ENCODE measurements at regions of chr2 and their contacts with region 1.

Region 1: DNA sequence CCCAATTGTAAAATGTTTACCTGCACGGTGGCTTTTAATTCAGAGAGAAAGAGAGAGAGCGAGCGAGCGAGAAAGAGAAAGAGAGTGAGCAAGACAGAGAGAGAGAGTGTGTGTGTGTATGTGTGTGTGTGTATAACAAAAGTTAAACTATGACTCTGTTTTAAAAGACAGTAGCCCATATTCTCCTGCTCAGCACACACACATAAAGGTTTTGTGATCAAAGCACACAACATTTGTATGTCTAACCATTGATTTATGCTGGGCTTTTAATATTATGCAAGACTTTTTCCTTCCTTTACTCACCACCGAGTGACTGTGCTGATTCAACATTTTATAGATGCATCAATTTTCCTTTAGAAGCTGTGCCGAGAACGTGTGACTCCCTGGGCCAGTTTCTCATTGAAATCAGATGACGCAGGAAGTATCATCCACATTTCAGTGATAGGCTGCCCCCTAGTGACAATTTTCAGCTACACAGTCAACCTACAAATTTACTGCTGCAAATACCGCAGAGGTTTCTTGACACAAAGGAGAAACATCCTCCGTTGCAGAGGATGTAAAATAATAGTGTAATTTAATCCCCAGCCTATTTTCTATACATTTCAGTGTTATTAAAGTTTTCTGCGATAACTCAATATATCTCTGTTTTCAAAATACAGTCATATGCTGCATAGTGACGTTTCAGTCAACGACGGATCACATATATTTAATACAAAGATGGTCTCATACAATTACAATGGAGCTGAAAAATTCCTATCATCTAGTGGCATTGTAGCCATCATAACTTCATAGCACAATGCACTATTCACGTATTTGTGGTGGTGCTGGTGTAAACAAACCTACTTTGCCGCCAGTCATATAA is 165.9 kb upstream of the TANK start:
- DNase-seq: peak; percentile 76
- H3K4me3 ChIP-seq: no peak overlapping the region
- H3K27ac ChIP-seq: no peak overlapping the region
- H3K27me3 ChIP-seq: no peaks in the 10 kb centered on the region
- CTCF ChIP-seq: peak; percentile 78

Region 2: DNA sequence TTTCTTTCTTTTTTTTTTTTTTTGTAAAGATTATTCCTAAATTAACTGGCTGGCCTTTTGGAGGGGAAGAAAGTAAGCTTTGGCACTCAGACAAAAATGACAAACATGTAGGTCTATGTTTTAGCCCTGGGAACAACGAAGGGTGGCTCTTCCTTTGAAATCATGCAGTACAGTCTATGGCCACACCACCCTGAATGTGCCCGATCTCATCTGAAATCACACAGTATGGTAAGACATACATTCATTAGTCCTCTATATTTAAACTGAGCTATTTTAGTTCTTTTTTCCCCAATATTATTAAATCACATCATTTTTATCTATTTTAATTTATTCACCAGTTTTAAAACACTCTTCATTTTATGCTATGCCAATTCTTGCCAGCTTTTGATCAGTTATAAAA is 980.1 kb before region 1 on chr2:
- CTCF ChIA-PET with region 1: interaction called, 12 read pairs
- POLR2A ChIA-PET with region 1: no interaction called
- DNase-seq: no peak
- H3K4me3 ChIP-seq: no peak overlapping the region
- H3K27ac ChIP-seq: no peak overlapping the region
- H3K27me3 ChIP-seq: peaks cover under 1% of the 10 kb centered on the region
- CTCF ChIP-seq: no peak

Region 3: GRCh38 chr2:160306985-160307384 is 687.4 kb before region 1 on chr2:
- CTCF ChIA-PET with region 1: no interaction called
- POLR2A ChIA-PET with region 1: no interaction called
- DNase-seq: peak; percentile 87
- H3K4me3 ChIP-seq: no peak overlapping the region
- H3K27ac ChIP-seq: peak overlapping the region; percentile 65
- H3K27me3 ChIP-seq: no peaks in the 10 kb centered on the region
- CTCF ChIP-seq: 0 out of 2 replicates have a peak, but pooled peaks have one; percentile 10

Region 4: GRCh38 chr2:160324161-160324800 is 670.1 kb before region 1 on chr2:
- CTCF ChIA-PET with region 1: interaction called, 30 read pairs
- POLR2A ChIA-PET with region 1: no interaction called
- DNase-seq: no peak
- H3K4me3 ChIP-seq: no peak overlapping the region
- H3K27ac ChIP-seq: no peak overlapping the region
- H3K27me3 ChIP-seq: no peaks in the 10 kb centered on the region
- CTCF ChIP-seq: peak; percentile 78

Region 5: GRCh38 chr2:161004379-161004778 is 10.0 kb after region 1 on chr2:
- CTCF ChIA-PET with region 1: interaction called, 13 read pairs
- POLR2A ChIA-PET with region 1: no interaction called
- DNase-seq: no peak
- H3K4me3 ChIP-seq: no peak overlapping the region
- H3K27ac ChIP-seq: no peak overlapping the region
- H3K27me3 ChIP-seq: no peaks in the 10 kb centered on the region
- CTCF ChIP-seq: peak; percentile 53

Region 6: DNA sequence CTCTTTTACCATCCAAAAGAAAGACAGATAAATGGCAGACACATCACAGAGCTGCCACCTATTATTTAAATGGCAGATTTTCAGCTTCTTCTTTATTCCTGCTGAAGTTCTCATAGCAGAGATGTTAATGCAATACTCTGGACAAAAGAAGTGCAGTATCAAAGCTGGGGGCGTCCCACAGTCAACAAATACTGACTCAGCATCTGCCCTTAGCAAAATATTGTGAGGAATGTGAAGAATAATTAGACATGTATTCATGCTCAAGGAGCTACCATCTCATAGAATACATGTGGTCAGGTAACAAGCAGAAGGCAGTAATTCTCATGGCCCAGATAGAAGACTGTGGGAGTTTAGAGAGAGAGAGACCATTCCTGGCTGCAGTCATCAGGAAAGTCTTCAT is 57.8 kb after region 1 on chr2:
- CTCF ChIA-PET with region 1: no interaction called
- POLR2A ChIA-PET with region 1: no interaction called
- DNase-seq: no peak
- H3K4me3 ChIP-seq: no peak overlapping the region
- H3K27ac ChIP-seq: no peak overlapping the region
- H3K27me3 ChIP-seq: no peaks in the 10 kb centered on the region
- CTCF ChIP-seq: no peak

Measured in AG04450 (cell line).